ENCODE measurements at regions of chr2 and their contacts with region 1.

Region 1: GRCh38 chr2:120656273-120656950 is 79.3 kb upstream of the GLI2 start:
- DNase-seq: peak in 27 of 42 donors; percentile 12 to 63 (median 35)

Region 2: GRCh38 chr2:120576509-120577474 is 79.6 kb before region 1 on chr2:
- intact Hi-C with region 1: no loop called
- DNase-seq: peak in 1 of 42 donors; percentile 42

Region 3: DNA sequence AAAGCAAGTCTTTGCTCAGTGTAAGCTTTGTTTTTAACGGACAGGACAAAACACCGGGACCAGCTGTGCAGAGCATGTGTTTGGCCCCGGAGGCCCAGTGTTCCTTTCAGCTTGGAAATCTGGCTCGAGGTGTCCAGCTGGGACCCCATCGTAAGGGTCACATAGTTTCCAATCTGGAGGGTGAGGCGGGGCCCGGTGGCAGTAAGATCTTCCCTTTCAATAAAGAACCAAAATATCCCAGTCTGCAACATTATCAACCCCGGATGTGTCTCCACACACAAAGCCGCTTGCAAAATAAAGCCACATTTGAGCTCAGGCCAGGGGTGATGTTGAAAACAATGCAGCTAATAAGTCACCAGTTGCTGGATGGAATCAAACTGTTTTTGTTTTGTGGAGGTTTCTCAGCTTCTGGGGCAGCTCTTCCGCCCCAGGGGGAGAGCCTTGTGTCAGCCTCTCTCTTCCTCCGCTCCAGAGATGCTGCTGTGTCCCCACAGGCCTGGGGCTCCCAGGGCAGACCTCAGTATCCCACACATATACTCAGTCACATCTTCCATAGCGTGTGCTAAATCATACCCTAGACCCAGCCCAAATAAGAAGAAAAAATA is 59.3 kb before region 1 on chr2:
- intact Hi-C with region 1: loop called (anchors 10 kb)
- DNase-seq: peak in 22 of 42 donors; percentile 4 to 66 (median 35)

Region 4: DNA sequence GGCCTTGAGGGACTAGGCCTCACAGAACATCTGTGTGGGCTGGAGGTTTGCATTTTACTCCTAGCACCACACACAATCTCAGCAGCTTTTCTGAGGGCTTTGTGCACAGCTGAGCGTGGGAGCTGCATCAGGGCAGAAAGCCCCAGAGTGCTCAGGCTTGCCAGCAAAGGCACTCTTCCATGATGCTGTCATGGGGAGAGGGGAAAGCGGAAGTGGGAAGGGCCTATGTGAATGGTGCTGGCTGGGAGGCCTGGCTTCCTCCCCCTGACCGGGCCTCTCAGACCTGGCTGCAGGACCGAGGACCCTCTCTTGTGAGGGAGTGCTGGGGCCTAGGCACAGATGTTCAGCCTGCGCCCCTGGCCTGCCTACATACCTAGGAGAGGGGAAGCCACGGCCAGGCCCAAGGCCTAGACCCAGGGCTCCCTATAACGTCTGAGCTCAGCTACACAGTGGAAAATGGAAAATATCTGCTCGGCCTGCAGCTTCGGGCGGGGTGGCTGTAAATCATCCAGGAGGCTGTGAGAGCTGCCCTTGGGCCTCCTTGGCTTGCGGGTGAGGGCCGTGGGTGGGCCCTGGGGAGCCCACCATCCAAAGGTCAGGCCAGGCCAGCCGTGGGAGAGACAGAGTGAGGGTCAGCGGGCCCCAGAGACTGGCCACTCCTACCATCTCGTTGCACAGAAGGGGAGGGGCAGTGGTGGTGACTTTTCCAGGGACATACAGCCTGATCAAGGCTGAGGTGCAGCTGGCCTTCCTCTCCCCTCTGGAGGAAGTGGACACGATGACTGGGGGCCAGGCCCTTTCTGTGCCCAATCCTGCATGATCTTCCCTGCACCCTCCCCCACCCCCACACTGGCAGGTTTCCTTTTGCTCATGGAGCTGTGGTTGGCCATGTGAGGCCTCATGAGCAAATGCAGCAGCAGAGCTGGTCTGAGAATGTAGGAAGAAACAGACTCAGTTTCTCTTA is 102.1 kb after region 1 on chr2:
- intact Hi-C with region 1: no loop called
- DNase-seq: peak in 16 of 42 donors; percentile 1 to 65 (median 28)

Measured in head of caudate nucleus (tissue), 42 donors.